ENCODE measurements at regions of chr9 and their contacts with region 1.

Region 1: DNA sequence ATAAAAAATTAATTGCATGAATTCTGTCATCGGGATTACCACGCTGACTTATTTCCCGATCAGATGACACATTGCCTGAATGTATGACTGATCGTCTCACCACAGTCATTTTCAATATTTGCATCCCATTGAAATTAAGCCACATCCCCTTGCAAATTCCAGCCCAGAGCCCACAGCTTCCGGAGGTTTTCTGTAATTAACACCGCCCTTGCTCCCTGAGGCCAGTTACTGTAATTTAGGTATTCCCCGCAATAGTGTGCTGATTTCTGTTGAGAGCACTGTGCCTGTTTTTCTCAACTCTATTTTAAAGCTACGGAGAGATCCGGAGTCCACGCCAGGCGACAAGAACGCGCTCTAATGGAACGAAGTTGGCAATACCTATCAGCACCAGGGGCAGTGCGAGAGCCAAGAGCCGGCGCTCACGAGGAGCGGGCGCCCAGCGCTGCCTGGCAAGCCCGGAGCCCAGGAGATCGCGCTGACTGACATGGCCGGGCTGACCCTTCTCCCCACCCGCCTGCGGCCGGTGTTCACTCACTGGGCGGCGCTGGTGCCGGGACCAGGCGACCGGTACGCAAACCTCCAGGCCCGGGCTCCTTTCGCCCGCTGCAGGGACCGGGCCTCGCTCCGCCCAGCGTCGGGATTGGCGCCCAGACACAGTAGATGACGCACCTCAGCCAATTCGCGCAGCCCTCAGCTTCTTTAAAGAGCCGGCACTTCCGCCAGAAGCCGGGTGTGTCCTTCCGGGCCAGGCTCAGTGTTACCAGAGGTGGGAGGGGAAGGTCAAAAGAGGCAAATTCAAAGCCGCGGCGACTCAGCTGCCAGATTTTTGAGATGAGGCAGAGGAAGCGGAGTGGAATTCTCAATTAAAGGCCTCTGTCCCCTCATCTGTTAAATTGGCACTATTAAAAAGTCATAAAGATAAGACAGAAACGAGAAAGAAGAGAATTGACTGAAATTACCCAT is at the start of gene PLGRKT:
- DNase-seq: peak; percentile 97
- H3K4me3 ChIP-seq: peak within 1 kb of the TSS; percentile 75
- H3K27ac ChIP-seq: peak within 1 kb of the TSS; percentile 90
- H3K4me1 ChIP-seq: peaks cover 41% of the 10 kb centered on the region
- CTCF ChIP-seq: peak; percentile 54
- total RNA-seq, gene PLGRKT: 7.9 and 10.4 TPM in 2 replicates

Region 2: DNA sequence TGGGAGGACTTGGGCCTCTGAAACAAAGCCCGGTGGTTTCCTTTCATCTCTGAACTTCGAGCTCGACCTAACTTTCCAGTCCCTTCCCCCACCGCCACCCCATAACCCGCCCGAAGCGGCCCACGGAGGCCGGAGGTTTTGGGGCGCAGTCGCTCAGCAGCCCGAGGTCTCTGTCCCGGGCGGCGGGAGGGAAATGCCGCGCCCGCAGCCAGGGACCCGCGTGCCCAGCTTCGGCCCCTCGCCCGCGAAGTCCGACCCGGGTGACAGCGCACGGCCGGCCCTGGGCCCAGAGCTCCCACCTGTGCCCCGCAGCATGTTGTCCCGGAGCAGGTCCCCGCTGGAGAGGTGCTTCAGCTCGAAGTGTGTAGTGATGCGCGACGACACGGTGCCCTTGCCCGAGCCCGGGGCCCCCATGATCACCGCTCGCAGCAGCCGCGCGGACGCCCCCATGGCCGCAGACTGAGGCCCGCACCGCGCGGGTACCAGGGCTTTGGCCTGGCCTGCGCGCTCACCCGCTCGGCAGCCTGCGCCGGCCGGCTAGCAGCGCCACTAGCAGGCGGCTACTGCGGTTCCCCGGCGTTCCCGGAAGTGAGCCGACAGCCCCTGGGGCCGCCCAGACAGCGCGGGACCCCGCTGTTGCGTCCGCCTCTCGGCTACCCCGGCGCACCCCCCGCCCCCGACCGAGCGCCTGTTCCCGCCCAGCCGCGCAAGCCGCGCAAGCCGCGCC is 696.7 kb before region 1 on chr9 and contains the start of gene AK3:
- CTCF ChIA-PET with region 1: no interaction called
- POLR2A ChIA-PET with region 1: interaction called, 8 read pairs
- intact Hi-C with region 1: loop called (anchors 5 kb)
- DNase-seq: peak; percentile 94
- H3K4me3 ChIP-seq: peak within 1 kb of the TSS; percentile 86
- H3K27ac ChIP-seq: peak within 1 kb of the TSS; percentile 61
- H3K4me1 ChIP-seq: peaks cover 23% of the 10 kb centered on the region
- CTCF ChIP-seq: peak; percentile 49
- total RNA-seq, gene AK3: 64.4 and 108 TPM in 2 replicates

Region 3: DNA sequence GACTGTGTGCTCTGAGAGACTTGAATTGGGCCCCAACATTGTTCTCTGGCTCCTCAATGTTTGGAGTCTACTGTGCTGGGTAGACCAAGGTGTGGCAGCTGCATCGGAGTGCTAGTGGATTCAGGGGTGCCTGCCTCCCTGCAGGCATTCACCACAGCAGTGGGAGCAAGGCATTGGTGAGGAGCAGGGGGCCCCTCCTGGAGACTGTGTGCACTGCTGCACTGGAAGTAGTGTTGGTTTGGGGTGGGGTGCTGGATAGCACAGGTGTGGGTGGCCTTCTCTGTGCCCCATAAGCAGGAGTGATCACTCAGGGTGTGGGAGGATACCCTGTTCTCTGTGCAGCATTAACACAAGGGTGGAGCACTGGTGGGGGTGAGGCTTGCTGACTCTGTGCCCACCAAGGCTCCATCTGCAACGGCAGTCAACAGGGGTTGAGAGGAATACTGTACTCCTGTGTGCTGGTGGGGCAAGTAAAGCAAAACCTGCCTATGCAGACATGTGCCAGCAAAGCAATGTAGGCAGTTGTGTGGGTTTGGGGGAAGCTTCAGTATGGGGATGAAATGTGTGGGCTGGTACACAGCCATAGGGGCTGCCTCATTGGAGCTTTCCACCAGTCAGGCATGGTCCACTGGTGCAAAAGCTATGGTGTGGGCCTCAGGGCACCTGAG is 291.2 kb before region 1 on chr9:
- CTCF ChIA-PET with region 1: no interaction called
- POLR2A ChIA-PET with region 1: no interaction called
- intact Hi-C with region 1: no loop called
- DNase-seq: no peak
- H3K4me3 ChIP-seq: no peak overlapping the region
- H3K27ac ChIP-seq: no peak overlapping the region
- H3K4me1 ChIP-seq: no peaks in the 10 kb centered on the region
- CTCF ChIP-seq: no peak

Region 4: DNA sequence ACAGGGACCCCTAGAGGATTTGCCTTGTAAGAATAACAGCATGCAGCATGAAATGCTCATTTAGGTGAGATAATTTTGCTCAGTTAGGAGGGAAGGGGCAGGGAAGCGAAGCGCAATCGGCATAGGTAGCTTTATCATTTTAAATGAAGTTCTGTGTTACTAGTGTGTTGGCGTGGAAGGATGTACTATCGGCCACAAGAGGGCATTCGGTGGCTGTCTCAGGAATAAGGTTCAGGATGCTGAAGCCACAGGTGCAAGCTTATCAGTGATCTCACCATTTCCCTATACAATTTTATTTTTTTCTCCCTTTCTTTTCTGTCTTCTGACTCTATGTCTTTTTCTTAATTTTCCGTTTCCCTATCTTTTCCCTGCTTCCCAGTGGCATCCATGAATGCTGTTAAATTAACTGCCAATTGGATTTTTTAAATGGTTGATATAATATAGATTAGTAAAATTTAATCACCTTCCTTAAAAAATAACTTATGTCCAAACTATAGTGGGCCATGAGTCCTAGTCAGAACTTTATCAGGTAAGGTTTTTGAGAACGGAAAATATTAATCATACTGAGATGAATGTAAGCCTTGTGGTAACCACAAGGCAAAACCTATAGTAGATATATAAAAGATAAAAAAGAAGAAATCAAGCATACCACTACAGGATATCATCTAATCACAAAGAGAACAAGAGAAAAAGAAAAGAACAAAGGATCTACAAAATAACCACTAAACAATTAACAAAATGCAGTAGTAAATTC is 250.9 kb before region 1 on chr9:
- CTCF ChIA-PET with region 1: no interaction called
- POLR2A ChIA-PET with region 1: no interaction called
- intact Hi-C with region 1: loop called (anchors 1 kb)
- DNase-seq: peak; percentile 50
- H3K4me3 ChIP-seq: no peak overlapping the region
- H3K27ac ChIP-seq: no peak overlapping the region
- H3K4me1 ChIP-seq: no peaks in the 10 kb centered on the region
- CTCF ChIP-seq: peak; percentile 71

Region 5: GRCh38 chr9:5263351-5264218 is 173.9 kb before region 1 on chr9:
- CTCF ChIA-PET with region 1: no interaction called
- POLR2A ChIA-PET with region 1: no interaction called
- intact Hi-C with region 1: no loop called
- DNase-seq: peak; percentile 19
- H3K4me3 ChIP-seq: no peak overlapping the region
- H3K27ac ChIP-seq: no peak overlapping the region
- H3K4me1 ChIP-seq: no peaks in the 10 kb centered on the region
- CTCF ChIP-seq: peak; percentile 43

Region 6: GRCh38 chr9:5389109-5389732 is 48.3 kb before region 1 on chr9:
- CTCF ChIA-PET with region 1: no interaction called
- POLR2A ChIA-PET with region 1: no interaction called
- intact Hi-C with region 1: no loop called
- DNase-seq: no peak
- H3K4me3 ChIP-seq: no peak overlapping the region
- H3K27ac ChIP-seq: no peak overlapping the region
- H3K4me1 ChIP-seq: no peaks in the 10 kb centered on the region
- CTCF ChIP-seq: no peak

Region 7: GRCh38 chr9:5529683-5530221 is 92.2 kb after region 1 on chr9:
- CTCF ChIA-PET with region 1: no interaction called
- POLR2A ChIA-PET with region 1: interaction called, 7 read pairs
- intact Hi-C with region 1: loop called (anchors 5 kb)
- DNase-seq: peak; percentile 76
- H3K4me3 ChIP-seq: peak overlapping the region; percentile 48
- H3K27ac ChIP-seq: peak overlapping the region; percentile 48
- H3K4me1 ChIP-seq: peaks cover 42% of the 10 kb centered on the region
- CTCF ChIP-seq: no peak

Region 8: DNA sequence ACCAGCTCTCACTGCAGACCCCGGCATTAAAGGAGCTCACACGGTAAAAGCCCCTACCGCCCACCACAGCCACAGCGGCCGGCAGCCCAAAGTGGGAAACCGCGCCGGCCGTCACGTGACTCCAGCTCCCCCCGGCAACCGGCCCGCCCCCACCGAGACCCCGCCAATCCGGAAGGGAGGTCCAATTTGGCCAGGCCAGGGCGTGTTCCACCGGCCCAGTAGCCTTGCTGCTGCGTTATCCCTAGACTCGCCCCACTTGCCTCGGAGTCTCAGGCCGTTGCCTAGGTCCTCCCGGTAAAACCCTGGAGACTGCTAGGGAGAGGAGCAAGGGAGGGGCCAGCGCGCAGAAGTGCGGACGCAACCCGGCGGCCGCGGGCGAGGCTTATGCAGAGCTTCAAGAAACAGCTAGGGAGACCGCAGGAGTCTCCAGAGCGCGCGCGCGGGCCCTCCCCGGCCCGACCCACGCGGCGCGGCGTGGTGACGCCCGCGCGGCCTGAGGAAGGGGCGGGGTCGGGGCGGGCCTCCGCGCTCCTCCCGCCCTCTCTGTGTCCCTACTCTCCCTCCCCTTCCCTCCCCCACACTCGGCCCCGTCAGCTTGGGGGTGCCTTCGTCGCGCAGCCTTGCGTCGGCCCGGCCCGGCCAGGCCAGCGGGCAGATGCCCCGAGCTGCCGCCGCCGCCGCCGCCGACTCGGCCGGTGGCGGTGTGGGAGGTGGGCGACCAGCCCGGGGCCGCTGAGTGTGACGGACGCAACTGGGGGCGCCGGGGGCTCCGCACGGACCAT is 191.2 kb after region 1 on chr9 and contains the start of gene RIC1:
- CTCF ChIA-PET with region 1: no interaction called
- POLR2A ChIA-PET with region 1: interaction called, 7 read pairs
- intact Hi-C with region 1: loop called (anchors 2 kb)
- DNase-seq: peak; percentile 91
- H3K4me3 ChIP-seq: peak within 1 kb of the TSS; percentile 81
- H3K27ac ChIP-seq: peak within 1 kb of the TSS; percentile 100
- H3K4me1 ChIP-seq: peaks cover 58% of the 10 kb centered on the region
- CTCF ChIP-seq: no peak
- total RNA-seq, gene RIC1: 72.9 and 77.0 TPM in 2 replicates

Region 9: GRCh38 chr9:6015278-6016157 is 578.0 kb after region 1 on chr9 and contains the start of gene RANBP6:
- CTCF ChIA-PET with region 1: no interaction called
- POLR2A ChIA-PET with region 1: no interaction called
- intact Hi-C with region 1: loop called (anchors 5 kb)
- DNase-seq: peak; percentile 87
- H3K4me3 ChIP-seq: peak within 1 kb of the TSS; percentile 96
- H3K27ac ChIP-seq: peak within 1 kb of the TSS; percentile 38
- H3K4me1 ChIP-seq: peaks cover 33% of the 10 kb centered on the region
- CTCF ChIP-seq: no peak
- total RNA-seq, gene RANBP6: 23.9 and 28.4 TPM in 2 replicates